H1 (cell line): ENCODE measurements at regions of chr10 and their contacts with region 1.

Region 1: GRCh38 chr10:112434988-112435619 is 11.6 kb downstream of the ZDHHC6 start:
- DNase-seq: no peak
- H3K4me3 ChIP-seq: no peak overlapping the region
- H3K27ac ChIP-seq: no peak overlapping the region
- H3K4me1 ChIP-seq: no peaks in the 10 kb centered on the region
- H3K27me3 ChIP-seq: no peaks in the 10 kb centered on the region
- CTCF ChIP-seq: peak in 1 of 3 experiments; percentile 7; a peak in 2 of 4 replicates
- EP300 ChIP-seq: no peak
- POLR2A ChIP-seq: no peak
- RAD21 ChIP-seq: peak in 1 of 2 experiments; percentile 46; a peak in 3 of 4 replicates

Region 2: GRCh38 chr10:112375721-112376395 is 59.2 kb before region 1 on chr10:
- CTCF ChIA-PET with region 1: interaction called, 13 read pairs
- POLR2A ChIA-PET with region 1: no interaction called
- DNase-seq: no peak
- H3K4me3 ChIP-seq: no peak overlapping the region
- H3K27ac ChIP-seq: no peak overlapping the region
- H3K4me1 ChIP-seq: no peaks in the 10 kb centered on the region; a peak in 1 of 7 replicates
- H3K27me3 ChIP-seq: no peaks in the 10 kb centered on the region
- CTCF ChIP-seq: no peak
- EP300 ChIP-seq: no peak
- POLR2A ChIP-seq: no peak
- RAD21 ChIP-seq: no peak